GM10248 (cell line): ENCODE measurements at regions of chr7 and their contacts with region 1.

Region 1: GRCh38 chr7:27576360-27576944 is 86.2 kb downstream of the HIBADH start:
- DNase-seq: peak; percentile 24
- CTCF ChIP-seq: peak; percentile 54

Region 2: DNA sequence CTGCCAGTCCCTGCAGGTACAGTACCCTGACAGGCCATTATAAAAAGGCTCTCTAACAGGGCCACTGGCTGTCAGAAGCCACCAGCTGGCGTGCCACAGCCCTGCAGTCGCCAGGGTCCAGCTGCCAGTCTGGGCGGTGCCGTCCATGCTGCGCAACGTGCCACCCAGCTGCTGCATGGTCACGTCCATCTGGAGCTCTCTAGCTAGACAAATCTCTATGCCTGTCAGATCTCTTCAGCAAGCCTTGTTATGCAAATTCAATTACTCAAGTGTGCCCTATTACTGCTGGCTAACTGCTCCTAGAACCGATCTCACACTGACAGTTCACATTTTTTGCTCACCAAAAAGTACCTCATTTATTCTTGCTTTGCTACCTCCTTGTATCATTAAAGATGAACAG is 10.4 kb after region 1 on chr7:
- CTCF ChIA-PET with region 1: interaction called, 17 read pairs
- POLR2A ChIA-PET with region 1: no interaction called
- DNase-seq: peak; percentile 52
- CTCF ChIP-seq: no peak

Region 3: DNA sequence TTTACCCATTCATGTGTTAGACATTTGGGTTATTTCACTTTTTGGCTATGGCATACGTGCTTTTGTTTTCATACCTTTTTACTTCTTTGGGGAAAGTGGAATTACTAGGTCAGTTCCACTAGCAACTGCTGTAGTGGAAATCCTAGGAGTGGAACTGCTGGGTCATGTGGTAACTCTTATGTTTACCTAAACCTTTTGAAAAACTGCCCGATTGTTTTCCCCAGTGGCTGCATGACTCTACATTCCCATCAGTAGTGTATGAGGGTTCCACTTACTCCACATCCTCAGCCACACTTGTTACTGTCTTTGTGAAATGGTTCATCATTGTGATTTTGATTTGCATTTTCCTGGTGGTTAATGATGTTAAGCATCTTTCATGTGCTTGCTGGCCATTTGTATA is 245.8 kb after region 1 on chr7:
- CTCF ChIA-PET with region 1: no interaction called
- POLR2A ChIA-PET with region 1: no interaction called
- DNase-seq: no peak
- CTCF ChIP-seq: no peak